ENCODE measurements at regions of chr12 and their contacts with region 1.

Region 1: GRCh38 chr12:120495723-120496412 is at the start of gene DYNLL1:
- DNase-seq: peak; percentile 92 to 98 (median 96)
- H3K4me3 ChIP-seq: peak within 1 kb of the TSS; percentile 55 to 100 (median 96)
- H3K27ac ChIP-seq: peak within 1 kb of the TSS; percentile 80 to 100 (median 96)
- H3K27me3 ChIP-seq: no peaks in the 10 kb centered on the region
- CTCF ChIP-seq: peak in 38 of 56 donors; percentile 6 to 55 (median 35)
- total RNA-seq, gene DYNLL1: 262 to 795 (median 615) TPM

Region 2: DNA sequence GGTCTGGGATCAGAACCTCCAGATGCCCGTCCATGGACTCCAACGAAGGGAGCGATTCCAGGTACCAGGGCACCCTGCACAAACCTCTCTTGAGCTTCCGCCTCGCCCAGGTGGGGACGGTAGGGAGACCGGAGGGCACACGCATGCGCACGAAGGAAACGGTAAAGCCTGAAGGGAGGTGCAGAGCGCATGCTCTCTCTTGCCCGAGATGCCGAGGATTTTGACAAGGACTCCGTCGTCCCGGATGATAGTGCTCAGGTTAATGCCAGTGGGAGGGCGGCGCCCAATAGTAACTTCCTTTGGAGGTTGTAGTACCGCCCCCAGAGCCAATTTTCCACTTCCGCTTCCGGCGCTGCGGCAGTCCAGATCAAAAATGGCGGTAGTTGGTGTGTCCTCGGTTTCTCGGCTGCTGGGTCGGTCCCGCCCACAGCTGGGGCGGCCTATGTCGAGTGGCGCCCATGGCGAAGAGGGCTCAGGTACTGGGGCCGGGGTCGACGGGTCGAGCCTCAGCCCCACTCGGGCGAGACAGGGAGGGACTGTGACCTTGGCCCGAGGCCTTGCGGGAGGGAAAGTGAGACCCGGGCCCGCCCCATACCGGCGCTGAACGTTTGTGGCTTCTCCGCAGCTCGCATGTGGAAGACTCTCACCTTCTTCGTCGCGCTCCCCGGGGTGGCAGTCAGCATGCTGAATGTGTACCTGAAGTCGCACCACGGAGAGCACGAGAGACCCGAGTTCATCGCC is 57.9 kb before region 1 on chr12 and contains the start of gene COX6A1:
- intact Hi-C with region 1: loop called in 1 of 2 experiments (anchors 5 kb)
- DNase-seq: peak; percentile 87 to 97 (median 96)
- H3K4me3 ChIP-seq: peak within 1 kb of the TSS; percentile 64 to 98 (median 88)
- H3K27ac ChIP-seq: peak within 1 kb of the TSS; percentile 40 to 93 (median 85)
- H3K27me3 ChIP-seq: no peaks in the 10 kb centered on the region
- CTCF ChIP-seq: peak in 42 of 56 donors; percentile 10 to 67 (median 41)
- total RNA-seq, gene COX6A1: 341 to 794 (median 594) TPM

Region 3: DNA sequence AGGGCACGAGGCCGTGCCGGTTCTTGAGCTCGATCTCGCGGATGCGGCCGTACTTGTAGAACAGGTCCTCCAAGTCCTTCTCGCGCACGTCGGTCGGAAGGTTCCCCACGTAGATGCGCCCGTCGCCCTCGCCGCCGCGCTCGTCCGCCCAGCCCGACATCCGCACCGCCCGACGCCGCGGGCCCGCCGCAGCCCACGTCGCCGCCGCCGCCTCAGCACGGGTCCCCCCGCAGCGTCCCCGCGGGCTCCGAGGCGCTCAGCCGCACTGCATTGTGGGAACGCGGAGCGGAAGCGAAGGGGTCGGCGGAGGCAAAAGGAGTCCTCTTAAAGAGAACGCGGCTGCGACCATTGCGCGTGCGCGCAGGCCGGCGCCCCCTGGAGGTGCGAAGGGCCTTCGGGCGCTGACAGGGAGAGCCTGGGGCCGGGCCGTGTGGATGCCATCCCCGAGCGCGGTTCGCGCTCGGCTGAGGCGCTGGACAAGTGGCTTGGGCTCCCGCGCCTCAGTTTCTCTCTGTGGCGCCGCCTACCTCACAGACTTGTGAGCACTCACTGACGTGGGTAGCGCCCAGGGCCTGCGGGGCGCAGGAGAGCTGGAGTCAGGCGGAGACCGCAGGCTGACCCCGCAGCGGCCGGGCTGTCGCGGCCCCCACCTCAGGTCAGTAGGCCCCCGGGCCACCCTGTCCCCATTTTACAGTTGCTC is 26.3 kb before region 1 on chr12 and contains the start of gene SRSF9:
- intact Hi-C with region 1: loop called (anchors 1 to 2 kb)
- DNase-seq: peak; percentile 92 to 97 (median 94)
- H3K4me3 ChIP-seq: peak within 1 kb of the TSS; percentile 67 to 99 (median 91)
- H3K27ac ChIP-seq: peak within 1 kb of the TSS; percentile 59 to 98 (median 92)
- H3K27me3 ChIP-seq: no peaks in the 10 kb centered on the region
- CTCF ChIP-seq: peak; percentile 83 to 99 (median 94)
- total RNA-seq, gene SRSF9: 76.0 to 113 (median 95.4) TPM

Region 4: GRCh38 chr12:120514002-120514401 is 18.1 kb after region 1 on chr12:
- intact Hi-C with region 1: loop called in 1 of 2 experiments (anchors 2 kb)
- DNase-seq: peak in 8 of 10 donors; percentile 37 to 69 (median 56)
- H3K4me3 ChIP-seq: peak overlapping the region in 3 of 59 donors; percentile 15 to 38 (median 33)
- H3K27ac ChIP-seq: peak overlapping the region in 58 of 59 donors; percentile 62 to 97 (median 90)
- H3K27me3 ChIP-seq: no peaks in the 10 kb centered on the region
- CTCF ChIP-seq: peak in 10 of 56 donors; percentile 3 to 34 (median 11)

Region 5: GRCh38 chr12:120528861-120529525 is 33.1 kb after region 1 on chr12 and contains the start of gene COQ5:
- intact Hi-C with region 1: loop called in 1 of 2 experiments (anchors 2 kb)
- DNase-seq: peak; percentile 89 to 97 (median 94)
- H3K4me3 ChIP-seq: peak within 1 kb of the TSS; percentile 61 to 99 (median 87)
- H3K27ac ChIP-seq: peak within 1 kb of the TSS; percentile 77 to 99 (median 93)
- H3K27me3 ChIP-seq: no peaks in the 10 kb centered on the region
- CTCF ChIP-seq: peak in 25 of 56 donors; percentile 3 to 52 (median 25)
- total RNA-seq, gene COQ5: 14.4 to 30.4 (median 22.9) TPM

Region 6: GRCh38 chr12:120534203-120534702 is 38.4 kb after region 1 on chr12 and contains the start of gene RNF10:
- intact Hi-C with region 1: loop called (anchors 2 to 5 kb)
- DNase-seq: peak; percentile 59 to 81 (median 78)
- H3K4me3 ChIP-seq: peak within 1 kb of the TSS; percentile 64 to 100 (median 97)
- H3K27ac ChIP-seq: peak within 1 kb of the TSS; percentile 63 to 96 (median 91)
- H3K27me3 ChIP-seq: no peaks in the 10 kb centered on the region
- CTCF ChIP-seq: peak in 13 of 56 donors; percentile 3 to 35 (median 24)
- total RNA-seq, gene RNF10: 177 to 288 (median 215) TPM

Region 7: DNA sequence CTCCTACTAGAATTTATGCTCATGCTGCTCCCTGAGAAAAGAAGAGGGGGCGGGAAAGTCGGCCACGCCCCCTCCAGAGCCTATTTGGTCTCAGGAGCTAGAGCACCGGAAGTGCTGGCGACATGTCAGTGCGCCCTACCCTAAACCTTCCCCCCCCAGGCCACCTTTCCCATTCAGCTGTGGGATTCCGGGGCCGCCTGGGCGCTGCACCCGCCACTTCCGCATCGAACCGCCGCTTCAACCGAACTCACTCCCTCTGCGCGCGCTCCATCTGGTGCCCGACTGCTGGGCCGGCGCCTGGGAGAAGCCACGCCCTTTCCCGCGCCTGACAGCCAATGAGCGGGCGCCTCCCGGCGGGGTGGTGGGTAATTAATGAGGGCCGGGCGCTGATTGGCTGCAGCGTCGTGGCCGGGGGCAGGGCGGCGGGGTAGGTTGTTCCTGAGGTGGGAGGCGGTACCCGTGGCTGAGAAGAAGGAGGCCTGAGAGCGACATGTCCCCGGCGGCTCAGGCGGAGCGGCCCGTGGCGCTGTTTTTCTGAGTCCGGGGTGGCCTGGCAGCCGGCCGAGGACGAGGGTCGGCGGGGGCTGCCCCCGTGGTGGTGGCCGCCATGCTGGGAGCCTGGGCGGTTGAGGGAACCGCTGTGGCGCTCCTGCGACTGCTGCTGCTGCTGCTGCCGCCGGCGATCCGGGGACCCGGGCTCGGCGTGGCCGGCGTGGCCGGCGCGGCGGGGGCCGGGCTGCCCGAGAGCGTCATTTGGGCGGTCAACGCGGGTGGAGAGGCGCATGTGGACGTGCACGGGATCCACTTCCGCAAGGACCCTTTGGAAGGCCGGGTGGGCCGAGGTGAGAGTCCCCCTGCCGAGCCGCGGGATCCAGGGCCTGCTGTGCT is 191.1 kb after region 1 on chr12 and contains the start of gene MLEC:
- intact Hi-C with region 1: no loop called
- DNase-seq: peak; percentile 96 to 99 (median 98)
- H3K4me3 ChIP-seq: peak within 1 kb of the TSS; percentile 70 to 100 (median 94)
- H3K27ac ChIP-seq: peak within 1 kb of the TSS; percentile 81 to 99 (median 96)
- H3K27me3 ChIP-seq: no peaks in the 10 kb centered on the region
- CTCF ChIP-seq: peak in 31 of 56 donors; percentile 8 to 58 (median 31)
- total RNA-seq, gene MLEC: 50.4 to 97.1 (median 73.3) TPM